Calu3 (cell line): ENCODE measurements at regions of chr22 and their contacts with region 1.

Region 1: DNA sequence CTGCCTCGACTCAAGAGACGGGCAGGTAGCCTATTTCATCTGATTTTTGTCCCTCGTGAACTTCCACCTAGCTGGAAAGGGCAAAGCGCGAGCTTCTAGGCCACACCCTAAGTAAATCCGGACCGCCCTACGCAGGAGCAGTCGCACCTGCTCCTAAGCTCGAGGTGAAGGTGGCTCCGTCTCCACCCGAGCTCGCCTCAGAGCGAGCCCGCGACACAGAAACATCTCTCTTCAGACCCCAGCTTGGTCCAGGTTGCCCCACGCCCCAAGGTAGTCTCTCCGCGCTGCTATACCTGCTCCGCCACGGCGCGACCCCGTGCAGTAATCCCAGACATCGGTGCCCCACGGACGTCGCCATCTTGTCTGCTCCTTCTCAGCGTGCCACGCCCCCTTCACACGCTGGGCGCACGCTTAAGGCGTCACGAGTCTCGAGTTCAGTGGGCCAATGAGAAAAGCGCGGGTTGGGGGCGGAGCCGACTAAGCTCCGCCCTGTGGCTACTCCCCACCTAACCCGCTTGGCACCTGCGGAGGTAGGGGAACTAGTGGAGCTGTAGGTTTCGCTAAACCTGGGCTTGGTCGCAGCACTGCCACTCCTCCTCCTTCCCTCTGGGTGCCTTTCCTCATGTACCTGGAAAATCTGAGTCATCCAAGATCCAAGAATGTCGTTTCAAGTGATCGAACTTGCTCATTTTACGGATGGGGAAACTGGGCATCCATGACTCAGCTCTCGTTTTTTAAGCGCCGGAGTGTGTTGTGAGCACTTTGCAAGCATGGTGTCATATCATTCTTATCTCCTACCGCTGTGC is at the start of gene PISD:
- DNase-seq: peak; percentile 97
- H3K4me3 Mint-ChIP-seq: peak within 1 kb of the TSS; percentile 93
- H3K27ac Mint-ChIP-seq: peak within 1 kb of the TSS; percentile 99
- H3K4me1 Mint-ChIP-seq: peaks cover 25% of the 10 kb centered on the region
- H3K27me3 Mint-ChIP-seq: no peaks in the 10 kb centered on the region
- CTCF ChIP-seq: no peak
- total RNA-seq, gene PISD: 45.9 and 53.4 TPM in 2 replicates

Region 2: DNA sequence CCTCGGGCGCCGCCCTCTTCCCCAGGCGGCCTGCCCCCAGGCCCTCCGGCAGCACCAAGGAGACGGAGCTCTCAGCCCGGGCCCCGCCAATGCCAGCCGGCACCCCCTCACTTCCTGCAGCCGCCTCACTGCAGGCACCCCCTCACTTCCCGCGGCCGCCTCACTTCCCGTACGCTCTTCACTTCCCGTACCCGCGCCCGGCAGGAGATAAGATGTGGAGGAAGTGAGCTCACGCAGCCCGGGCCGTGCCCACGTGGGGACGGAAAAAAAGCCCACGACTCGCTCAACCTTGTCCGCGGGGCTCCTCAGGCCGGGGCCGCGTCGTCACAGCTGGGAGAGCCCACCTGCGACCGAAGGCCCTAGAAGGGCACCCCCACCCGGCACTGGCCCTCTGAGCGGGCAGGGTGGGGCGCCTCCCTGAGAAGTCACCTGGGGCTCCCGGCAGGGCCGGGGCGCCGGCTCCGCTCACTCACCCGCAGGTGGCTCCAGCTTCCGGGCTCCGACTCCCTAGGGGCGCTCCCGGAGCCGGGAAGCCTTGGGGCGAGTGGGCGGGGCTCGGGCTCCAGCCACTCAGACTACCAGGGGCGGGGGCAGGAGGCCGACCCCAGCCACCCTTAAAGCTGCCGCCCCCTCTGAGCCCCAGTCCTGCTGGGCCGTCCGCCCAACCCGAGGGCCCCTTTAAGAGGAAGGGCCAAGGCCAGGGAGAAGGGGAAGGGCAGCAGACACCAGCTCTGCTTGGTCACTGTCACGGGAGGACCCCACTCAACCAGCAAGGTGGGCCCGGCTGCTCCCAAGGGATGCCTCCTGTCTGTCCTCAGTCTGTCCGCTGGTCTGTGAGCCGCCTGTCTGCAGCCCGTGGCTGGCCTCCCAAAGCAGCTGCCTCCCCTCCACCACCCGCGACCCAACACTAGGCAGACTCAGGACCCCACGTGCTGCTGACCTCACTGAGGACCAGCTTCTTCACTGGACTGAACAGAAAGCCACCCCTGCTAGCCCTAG is 31.4 kb before region 1 on chr22:
- CTCF ChIA-PET with region 1: interaction called, 12 read pairs
- intact Hi-C with region 1: no loop called
- DNase-seq: peak; percentile 95
- H3K4me3 Mint-ChIP-seq: peak overlapping the region; percentile 98
- H3K27ac Mint-ChIP-seq: peak overlapping the region; percentile 82
- H3K4me1 Mint-ChIP-seq: peaks cover 43% of the 10 kb centered on the region
- H3K27me3 Mint-ChIP-seq: no peaks in the 10 kb centered on the region
- CTCF ChIP-seq: no peak

Region 3: GRCh38 chr22:31676700-31677099 is 14.6 kb after region 1 on chr22:
- CTCF ChIA-PET with region 1: interaction called, 12 read pairs
- intact Hi-C with region 1: no loop called
- DNase-seq: peak; percentile 97
- H3K4me3 Mint-ChIP-seq: peak overlapping the region; percentile 71
- H3K27ac Mint-ChIP-seq: peak overlapping the region; percentile 81
- H3K4me1 Mint-ChIP-seq: peaks cover 14% of the 10 kb centered on the region
- H3K27me3 Mint-ChIP-seq: no peaks in the 10 kb centered on the region
- CTCF ChIP-seq: no peak

Region 4: DNA sequence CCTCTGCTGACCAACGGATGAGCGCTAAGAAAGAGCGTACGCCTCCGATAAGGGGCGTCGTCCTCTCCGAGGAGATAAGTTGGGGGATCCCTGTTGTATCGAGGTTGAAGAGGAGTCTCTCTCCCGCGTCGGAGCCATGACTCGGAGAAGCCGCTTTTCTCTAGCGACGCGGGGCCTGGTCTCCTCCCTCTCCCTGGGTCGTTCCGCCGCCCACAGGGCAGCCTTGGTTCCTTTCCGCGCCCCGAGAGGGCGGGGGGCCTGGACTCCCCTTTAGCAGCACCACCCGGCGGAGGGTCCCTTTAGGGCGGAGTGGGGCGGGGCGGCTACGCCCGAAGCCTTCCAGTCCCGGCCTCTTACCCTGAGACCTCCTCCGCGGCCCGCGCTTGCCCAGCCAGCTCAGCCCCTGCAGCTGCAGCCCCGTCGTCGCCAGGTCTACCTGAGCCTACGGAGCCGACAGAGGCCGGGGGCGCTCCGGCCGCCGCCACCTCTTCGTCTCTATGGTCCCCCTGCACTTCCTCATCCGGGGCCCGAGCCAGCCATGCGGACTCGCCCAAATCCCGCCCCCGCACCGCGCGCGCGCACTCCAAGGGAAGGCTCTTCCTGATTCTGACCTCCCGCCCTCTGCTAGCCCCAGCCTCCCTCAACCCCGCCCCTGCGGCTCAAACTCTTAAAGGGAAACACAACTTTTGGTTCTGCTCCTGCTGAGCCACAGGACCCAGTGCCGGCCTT is 87.7 kb after region 1 on chr22 and contains the start of gene PRR14L:
- CTCF ChIA-PET with region 1: interaction called, 3 read pairs
- intact Hi-C with region 1: loop called (anchors 5 kb)
- DNase-seq: peak; percentile 98
- H3K4me3 Mint-ChIP-seq: peak within 1 kb of the TSS; percentile 83
- H3K27ac Mint-ChIP-seq: peak within 1 kb of the TSS; percentile 77
- H3K4me1 Mint-ChIP-seq: peaks cover 33% of the 10 kb centered on the region
- H3K27me3 Mint-ChIP-seq: no peaks in the 10 kb centered on the region
- CTCF ChIP-seq: no peak
- total RNA-seq, gene PRR14L: 56.3 and 60.5 TPM in 2 replicates

Region 5: GRCh38 chr22:31872209-31872608 is 210.2 kb after region 1 on chr22:
- CTCF ChIA-PET with region 1: no interaction called
- intact Hi-C with region 1: no loop called
- DNase-seq: peak; percentile 2
- H3K4me3 Mint-ChIP-seq: no peak overlapping the region
- H3K27ac Mint-ChIP-seq: no peak overlapping the region
- H3K4me1 Mint-ChIP-seq: no peaks in the 10 kb centered on the region
- H3K27me3 Mint-ChIP-seq: no peaks in the 10 kb centered on the region
- CTCF ChIP-seq: no peak